ENCODE measurements at regions of chr9 and their contacts with region 1.

Region 1: DNA sequence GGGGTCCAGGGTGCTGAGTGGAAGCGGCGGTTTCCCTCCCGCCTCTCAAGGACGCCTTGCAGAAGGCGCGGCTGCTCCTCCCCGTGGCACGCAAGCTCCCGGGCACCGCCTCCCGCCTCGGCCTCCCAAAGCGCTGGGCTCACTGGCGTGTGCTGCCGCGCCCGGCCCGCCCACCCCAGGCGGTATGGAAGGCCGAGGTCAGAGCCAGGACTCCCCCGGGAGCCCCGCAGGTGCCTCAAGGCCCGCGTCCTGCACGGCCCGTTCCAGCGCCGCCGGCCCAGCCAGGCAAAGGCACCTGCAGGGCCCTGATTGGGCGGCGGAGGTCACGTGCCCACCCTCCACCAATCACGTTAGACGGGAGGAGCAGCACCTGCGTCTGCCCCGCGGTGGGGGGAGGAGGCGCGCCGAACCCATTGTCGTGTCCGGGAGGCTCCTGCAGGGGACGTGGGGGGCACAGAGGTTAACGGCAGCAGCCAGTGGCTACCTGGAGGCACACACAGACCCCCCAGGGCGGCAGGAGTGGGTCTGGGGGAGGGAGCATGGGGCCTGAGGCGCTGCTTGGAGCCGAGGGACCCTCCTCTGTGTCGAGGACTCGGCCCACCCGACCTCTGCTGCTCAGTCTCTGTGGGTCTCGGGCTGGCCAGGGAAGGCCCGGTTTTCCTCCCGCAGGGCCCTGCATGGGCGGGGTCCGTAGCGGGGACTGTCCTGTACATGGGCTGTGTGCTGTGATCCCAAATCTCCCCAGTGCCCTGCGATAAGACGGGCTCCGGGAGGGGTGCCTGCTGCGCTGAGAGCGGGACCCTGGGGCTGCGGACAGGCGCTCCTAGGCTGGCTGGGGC is 2.0 kb upstream of the LCN12 start:
- DNase-seq: peak; percentile 98
- ATAC-seq: peak; percentile 90

Region 2: DNA sequence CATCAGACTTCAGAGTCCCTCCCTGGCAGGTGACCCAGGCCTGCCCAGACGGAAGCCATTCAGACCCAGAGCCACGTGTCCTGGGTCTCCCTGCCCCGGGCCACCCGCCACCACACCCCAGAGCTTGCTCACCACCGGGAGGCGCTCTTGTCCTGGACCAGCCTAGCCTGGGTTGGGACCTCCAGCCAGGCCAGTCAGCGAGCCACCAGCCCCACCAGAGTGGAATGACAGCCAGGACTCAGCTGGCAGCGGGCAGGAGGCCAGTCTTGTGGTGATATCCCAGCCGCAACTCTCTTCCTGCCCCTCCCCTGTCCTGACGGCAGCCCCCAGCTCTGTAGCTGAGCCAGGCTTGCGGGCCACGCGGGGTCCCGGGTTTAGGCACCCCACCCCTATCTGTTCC is 25.6 kb after region 1 on chr9:
- intact Hi-C with region 1: loop called (anchors 2 kb)
- DNase-seq: peak; percentile 79
- ATAC-seq: no peak